WTC11 (cell line): ENCODE measurements at regions of chr14 and their contacts with region 1.

Region 1: DNA sequence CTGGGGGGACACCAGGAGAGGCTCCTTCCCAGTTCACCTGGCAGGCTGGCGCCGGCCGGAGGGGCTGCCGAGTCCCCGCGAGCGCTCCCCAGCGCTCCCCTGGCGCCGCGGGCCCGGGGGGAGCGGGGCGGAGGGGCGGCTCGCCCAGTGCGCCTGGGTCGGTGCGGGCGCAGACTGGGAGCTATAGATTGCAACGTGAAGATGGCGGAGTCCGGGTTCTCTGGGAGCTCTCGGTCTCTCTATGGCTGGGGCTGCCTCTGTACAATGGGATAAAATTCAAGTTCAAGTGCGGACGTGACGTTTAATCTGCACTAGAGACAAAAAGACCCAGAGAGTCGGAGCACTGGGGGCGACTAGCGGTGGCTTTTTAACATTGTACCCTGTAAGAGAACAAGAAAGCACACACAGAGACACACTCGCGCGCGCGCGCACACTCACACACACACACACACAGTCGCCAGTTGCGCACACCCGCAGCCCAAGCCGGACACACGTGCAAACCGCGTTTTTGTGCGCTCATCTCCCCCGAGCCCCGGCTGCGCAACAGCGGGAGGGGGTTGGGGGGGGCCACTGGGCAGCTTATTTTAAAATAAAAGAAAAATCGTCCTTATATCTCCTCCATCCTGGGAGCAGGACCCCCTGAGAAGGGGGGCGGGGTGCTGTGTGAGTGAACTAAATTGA is at the start of gene BCL11B:
- DNase-seq: peak; percentile 78
- ATAC-seq: peak; percentile 14
- H3K4me3 Mint-ChIP-seq: peak within 1 kb of the TSS; percentile 84
- H3K27ac Mint-ChIP-seq: peak within 1 kb of the TSS; percentile 50
- H3K4me1 Mint-ChIP-seq: peaks cover 41% of the 10 kb centered on the region
- H3K27me3 Mint-ChIP-seq: no peaks in the 10 kb centered on the region; the same call in 1 of the 2 replicates
- CTCF ChIP-seq: no peak
- total RNA-seq, gene BCL11B: 6.7 to 9.1 TPM (median 7.2 TPM) in 3 replicates

Region 2: DNA sequence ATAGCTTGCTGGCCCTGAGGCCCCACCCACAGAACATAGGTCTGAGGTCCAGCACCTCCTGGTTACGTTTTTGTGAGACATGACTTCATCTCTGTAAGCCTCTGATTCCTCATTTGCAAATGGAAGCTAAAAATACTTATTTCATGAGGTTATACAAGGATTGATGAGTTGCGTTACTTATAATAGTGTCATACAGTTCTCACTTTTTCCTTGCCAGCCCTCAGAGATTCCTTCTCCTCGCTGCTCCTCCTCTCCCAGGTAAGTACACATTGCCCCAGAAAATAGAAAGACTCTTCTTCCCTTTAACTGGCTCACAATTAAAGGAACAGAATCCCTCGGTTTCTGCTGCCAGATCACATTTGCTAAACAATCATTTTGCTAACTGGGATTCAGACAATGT is 1735.7 kb before region 1 on chr14:
- CTCF ChIA-PET with region 1: interaction called, 10 read pairs
- POLR2A ChIA-PET with region 1: no interaction called
- DNase-seq: no peak
- ATAC-seq: no peak
- H3K4me3 Mint-ChIP-seq: no peak overlapping the region
- H3K27ac Mint-ChIP-seq: no peak overlapping the region
- H3K4me1 Mint-ChIP-seq: no peaks in the 10 kb centered on the region
- H3K27me3 Mint-ChIP-seq: no peaks in the 10 kb centered on the region; the same call in 1 of the 2 replicates
- CTCF ChIP-seq: no peak

Region 3: GRCh38 chr14:99188731-99189191 is 83.3 kb before region 1 on chr14:
- CTCF ChIA-PET with region 1: interaction called, 13 read pairs
- POLR2A ChIA-PET with region 1: no interaction called
- DNase-seq: peak; percentile 73
- ATAC-seq: peak; percentile 91
- H3K4me3 Mint-ChIP-seq: no peak overlapping the region
- H3K27ac Mint-ChIP-seq: 0 out of 2 replicates have a peak overlapping the region, but pooled peaks have one; percentile 57
- H3K4me1 Mint-ChIP-seq: peaks cover 52% of the 10 kb centered on the region
- H3K27me3 Mint-ChIP-seq: no peaks in the 10 kb centered on the region
- CTCF ChIP-seq: peak; percentile 48